GM12878 (cell line): ENCODE measurements at regions of chr16 and their contacts with region 1.

Region 1: DNA sequence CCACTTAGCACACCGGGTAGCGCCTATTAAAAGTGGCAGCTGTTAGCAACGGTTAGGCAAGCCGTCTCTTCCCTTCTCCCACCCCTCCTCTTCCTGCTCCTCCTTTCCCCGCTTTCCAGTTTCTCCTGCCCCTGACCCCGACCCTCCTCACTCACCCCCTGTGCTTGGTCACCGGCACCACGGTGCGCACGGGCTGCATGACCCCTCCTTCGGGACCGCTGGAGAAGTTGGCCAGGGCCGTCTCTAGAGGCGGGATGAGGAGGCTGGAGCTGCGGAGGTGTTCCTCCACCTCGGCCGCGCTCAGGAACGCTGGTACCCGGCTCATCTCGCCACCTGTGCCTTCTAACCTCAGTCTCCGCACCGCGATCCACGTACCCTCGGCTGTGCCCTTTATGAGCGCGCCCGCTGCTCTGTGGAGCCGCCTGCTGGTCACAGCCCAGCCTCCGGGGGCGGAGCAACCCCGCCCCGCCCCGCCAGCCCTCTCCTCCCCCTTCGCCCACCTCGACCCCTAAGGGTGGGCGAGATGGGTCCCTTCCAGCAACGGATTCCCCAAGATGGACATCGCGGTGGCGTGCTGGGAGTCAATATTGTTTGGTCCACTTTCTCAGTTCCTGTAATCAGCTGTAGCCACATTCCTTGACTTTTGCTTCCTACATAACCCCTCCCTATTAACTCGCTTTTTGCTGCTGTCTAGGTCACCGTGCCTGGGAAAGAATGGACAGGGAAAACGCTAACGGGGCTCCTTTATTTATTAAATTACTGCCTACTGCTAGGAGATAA is at the start of gene CRYM:
- DNase-seq: no peak
- ATAC-seq: peak; percentile 88
- H3K4me3 ChIP-seq: peak within 1 kb of the TSS; percentile 50; the same call in 1 of the 2 replicates
- H3K27ac ChIP-seq: no peak within 1 kb of the TSS
- H3K4me1 ChIP-seq: peaks cover 25% of the 10 kb centered on the region
- H3K27me3 ChIP-seq: no peaks in the 10 kb centered on the region; a peak in 1 of 4 replicates
- CTCF ChIP-seq: peak; percentile 69 to 96 (median 70)
- EP300 ChIP-seq: no peak
- POLR2A ChIP-seq: no peak
- RAD21 ChIP-seq: peak; percentile 23; the same call in 1 of the 2 replicates
- polyA plus RNA-seq, gene CRYM: 2.3 to 3.0 TPM

Region 2: GRCh38 chr16:20660325-20660724 is 617.8 kb before region 1 on chr16:
- CTCF ChIA-PET with region 1: no interaction called
- POLR2A ChIA-PET with region 1: no interaction called
- RAD21 ChIA-PET with region 1: no interaction called
- SMC1A ChIA-PET with region 1: no interaction called
- in situ Hi-C with region 1: no loop called
- intact Hi-C with region 1: no loop called
- DNase-seq: no peak
- ATAC-seq: no peak
- H3K4me3 ChIP-seq: no peak overlapping the region
- H3K27ac ChIP-seq: no peak overlapping the region
- H3K4me1 ChIP-seq: no peaks in the 10 kb centered on the region
- H3K27me3 ChIP-seq: no peaks in the 10 kb centered on the region
- CTCF ChIP-seq: no peak
- EP300 ChIP-seq: no peak
- POLR2A ChIP-seq: no peak
- RAD21 ChIP-seq: no peak

Region 3: DNA sequence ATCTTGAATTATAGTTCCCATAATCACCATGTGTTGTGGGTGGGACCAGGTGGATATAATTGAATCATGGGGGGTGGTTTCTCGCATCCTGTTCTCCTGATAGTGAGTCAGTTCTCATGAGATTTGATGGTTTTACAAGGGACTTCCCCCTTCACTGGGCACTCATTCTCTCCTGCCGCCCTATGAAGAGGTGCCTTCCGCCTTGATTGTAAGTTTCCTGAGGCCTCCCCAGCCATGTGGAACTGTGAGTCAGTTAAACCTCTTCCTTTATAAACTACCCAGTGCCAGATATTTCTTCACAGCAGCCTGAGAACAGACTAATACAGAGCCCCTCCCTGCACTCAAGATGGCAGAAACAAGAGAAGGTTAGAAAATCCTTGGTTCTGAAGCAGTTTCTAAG is 93.3 kb before region 1 on chr16:
- CTCF ChIA-PET with region 1: interaction called, 58 read pairs
- POLR2A ChIA-PET with region 1: no interaction called
- RAD21 ChIA-PET with region 1: interaction called, 14 read pairs
- SMC1A ChIA-PET with region 1: interaction called, 29 read pairs
- in situ Hi-C with region 1: loop called (anchors 5 kb)
- intact Hi-C with region 1: loop called (anchors 1 kb)
- DNase-seq: no peak
- ATAC-seq: no peak
- H3K4me3 ChIP-seq: no peak overlapping the region
- H3K27ac ChIP-seq: no peak overlapping the region
- H3K4me1 ChIP-seq: peaks cover 6% of the 10 kb centered on the region
- H3K27me3 ChIP-seq: no peaks in the 10 kb centered on the region
- CTCF ChIP-seq: no peak
- EP300 ChIP-seq: no peak
- POLR2A ChIP-seq: no peak
- RAD21 ChIP-seq: no peak

Region 4: GRCh38 chr16:21194771-21195301 is 83.3 kb before region 1 on chr16:
- CTCF ChIA-PET with region 1: interaction called, 58 read pairs
- POLR2A ChIA-PET with region 1: no interaction called
- RAD21 ChIA-PET with region 1: interaction called, 4 read pairs
- SMC1A ChIA-PET with region 1: interaction called, 29 read pairs
- in situ Hi-C with region 1: no loop called
- intact Hi-C with region 1: no loop called
- DNase-seq: no peak
- ATAC-seq: no peak; the same call in 2 of the 3 replicates
- H3K4me3 ChIP-seq: no peak overlapping the region
- H3K27ac ChIP-seq: no peak overlapping the region
- H3K4me1 ChIP-seq: peaks cover 3% of the 10 kb centered on the region; the same call in 1 of the 2 replicates
- H3K27me3 ChIP-seq: no peaks in the 10 kb centered on the region
- CTCF ChIP-seq: no peak
- EP300 ChIP-seq: no peak
- POLR2A ChIP-seq: no peak
- RAD21 ChIP-seq: no peak

Region 5: GRCh38 chr16:21263640-21264570 is 14.2 kb before region 1 on chr16:
- CTCF ChIA-PET with region 1: interaction called, 20 read pairs
- POLR2A ChIA-PET with region 1: interaction called, 5 read pairs
- RAD21 ChIA-PET with region 1: interaction called, 13 read pairs
- SMC1A ChIA-PET with region 1: interaction called, 49 read pairs
- in situ Hi-C with region 1: no loop called
- intact Hi-C with region 1: no loop called
- DNase-seq: peak; percentile 48
- ATAC-seq: peak; percentile 94
- H3K4me3 ChIP-seq: no peak overlapping the region
- H3K27ac ChIP-seq: no peak overlapping the region
- H3K4me1 ChIP-seq: peaks cover 13% of the 10 kb centered on the region
- H3K27me3 ChIP-seq: no peaks in the 10 kb centered on the region
- CTCF ChIP-seq: no peak
- EP300 ChIP-seq: peak in 1 of 2 experiments; percentile 35; a peak in 1 of 4 replicates
- POLR2A ChIP-seq: no peak
- RAD21 ChIP-seq: no peak

Region 6: DNA sequence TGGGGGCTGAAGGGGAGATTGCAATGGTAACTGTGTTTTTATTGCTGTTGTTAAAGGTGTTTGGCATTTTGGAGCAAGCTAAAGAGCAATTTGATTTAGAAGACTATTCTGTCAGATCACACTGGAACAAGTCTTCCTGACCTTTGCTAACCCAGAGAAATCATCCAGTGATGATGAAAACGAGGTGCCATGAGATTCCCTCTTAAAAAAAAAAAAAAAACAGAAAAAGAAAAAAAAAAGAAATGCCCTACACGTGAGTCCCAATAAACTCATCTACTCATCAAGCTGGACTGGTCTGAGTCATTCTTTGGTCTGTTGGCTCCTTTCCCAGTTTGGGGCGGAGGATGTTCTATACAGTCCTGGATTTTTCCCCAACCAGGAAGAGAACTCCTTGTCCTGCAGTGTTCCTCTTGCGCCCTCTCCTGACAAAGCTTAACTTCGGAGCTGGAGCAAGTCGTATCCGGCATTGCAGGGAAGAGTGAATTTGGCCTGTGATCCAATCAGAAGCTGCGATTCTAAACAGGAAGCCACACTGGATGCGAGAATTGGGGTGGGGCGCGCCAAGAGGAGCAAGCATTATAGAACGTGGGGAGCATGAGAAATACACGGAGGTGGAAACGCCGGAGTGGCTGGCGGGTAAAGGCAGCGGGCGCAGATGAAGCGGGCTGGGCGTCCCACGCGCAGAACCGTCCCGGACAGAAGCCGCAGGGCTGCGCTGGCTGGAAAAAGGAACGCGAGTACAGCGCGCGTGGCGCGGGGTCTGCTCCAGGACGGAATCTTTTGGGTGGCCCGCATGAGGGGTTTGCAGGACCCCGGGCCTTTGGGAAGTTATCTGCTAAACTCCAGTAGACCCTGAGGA is 22.4 kb after region 1 on chr16:
- CTCF ChIA-PET with region 1: interaction called, 25 read pairs
- POLR2A ChIA-PET with region 1: interaction called, 3 read pairs
- RAD21 ChIA-PET with region 1: interaction called, 22 read pairs
- SMC1A ChIA-PET with region 1: interaction called, 87 read pairs
- in situ Hi-C with region 1: no loop called
- intact Hi-C with region 1: loop called (anchors 2 kb)
- DNase-seq: peak; percentile 93
- ATAC-seq: peak; percentile 75
- H3K4me3 ChIP-seq: peak overlapping the region; percentile 90
- H3K27ac ChIP-seq: peak overlapping the region; percentile 54
- H3K4me1 ChIP-seq: no peaks in the 10 kb centered on the region
- H3K27me3 ChIP-seq: no peaks in the 10 kb centered on the region
- CTCF ChIP-seq: peak; percentile 71 to 97 (median 77)
- EP300 ChIP-seq: no peak
- POLR2A ChIP-seq: no peak
- RAD21 ChIP-seq: peak; percentile 86